ENCODE measurements at regions of chr9 and their contacts with region 1.

Region 1: DNA sequence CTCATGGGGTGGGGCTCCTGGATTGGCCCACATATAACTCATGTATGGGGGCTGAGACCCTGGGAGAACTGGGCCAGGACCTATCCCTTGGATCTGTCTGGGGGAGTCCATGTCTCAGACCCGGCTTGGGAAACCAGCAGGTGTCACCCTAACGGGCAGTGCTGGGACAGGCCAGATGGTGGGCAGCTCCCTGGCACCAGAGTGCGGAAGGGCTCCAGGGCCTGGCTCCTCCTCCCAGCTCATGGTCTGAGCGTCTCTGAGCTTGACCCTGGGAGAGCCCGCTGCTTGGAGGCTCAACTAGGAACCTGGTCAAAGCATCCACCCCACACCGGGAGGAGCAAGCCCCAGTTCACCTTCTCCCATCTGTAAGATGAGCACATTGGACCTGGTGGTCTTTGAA is 15.5 kb upstream of the NCS1 start:
- DNase-seq: no peak
- ATAC-seq: peak in 3 of 4 donors; percentile 56 to 68 (median 57)
- H3K4me3 ChIP-seq: no peak overlapping the region
- H3K27ac ChIP-seq: no peak overlapping the region
- H3K4me1 ChIP-seq: no peaks in the 10 kb centered on the region
- H3K27me3 ChIP-seq: no peaks in the 10 kb centered on the region
- CTCF ChIP-seq: peak in 4 of 12 donors; percentile 12 to 26 (median 14)
- POLR2A ChIP-seq: no peak

Region 2: GRCh38 chr9:129068990-129069861 is 1087.4 kb before region 1 on chr9:
- intact Hi-C with region 1: loop called in 1 of 10 experiments (anchors 10 kb)
- DNase-seq: peak; percentile 83 to 91 (median 87)
- ATAC-seq: peak; percentile 94 to 97 (median 96)
- H3K4me3 ChIP-seq: peak overlapping the region in 1 of 12 donors; percentile 25
- H3K27ac ChIP-seq: peak overlapping the region; percentile 51 to 93 (median 84)
- H3K4me1 ChIP-seq: peaks cover 0 to 28% (median 11%) of the 10 kb centered on the region in 12 donors
- H3K27me3 ChIP-seq: no peaks in the 10 kb centered on the region
- CTCF ChIP-seq: peak in 1 of 12 donors; percentile 9
- POLR2A ChIP-seq: peak in 1 of 2 donors; percentile 32

Measured in heart left ventricle (tissue), 16 donors.